ENCODE measurements at regions of chr1 and their contacts with region 1.

Region 1: DNA sequence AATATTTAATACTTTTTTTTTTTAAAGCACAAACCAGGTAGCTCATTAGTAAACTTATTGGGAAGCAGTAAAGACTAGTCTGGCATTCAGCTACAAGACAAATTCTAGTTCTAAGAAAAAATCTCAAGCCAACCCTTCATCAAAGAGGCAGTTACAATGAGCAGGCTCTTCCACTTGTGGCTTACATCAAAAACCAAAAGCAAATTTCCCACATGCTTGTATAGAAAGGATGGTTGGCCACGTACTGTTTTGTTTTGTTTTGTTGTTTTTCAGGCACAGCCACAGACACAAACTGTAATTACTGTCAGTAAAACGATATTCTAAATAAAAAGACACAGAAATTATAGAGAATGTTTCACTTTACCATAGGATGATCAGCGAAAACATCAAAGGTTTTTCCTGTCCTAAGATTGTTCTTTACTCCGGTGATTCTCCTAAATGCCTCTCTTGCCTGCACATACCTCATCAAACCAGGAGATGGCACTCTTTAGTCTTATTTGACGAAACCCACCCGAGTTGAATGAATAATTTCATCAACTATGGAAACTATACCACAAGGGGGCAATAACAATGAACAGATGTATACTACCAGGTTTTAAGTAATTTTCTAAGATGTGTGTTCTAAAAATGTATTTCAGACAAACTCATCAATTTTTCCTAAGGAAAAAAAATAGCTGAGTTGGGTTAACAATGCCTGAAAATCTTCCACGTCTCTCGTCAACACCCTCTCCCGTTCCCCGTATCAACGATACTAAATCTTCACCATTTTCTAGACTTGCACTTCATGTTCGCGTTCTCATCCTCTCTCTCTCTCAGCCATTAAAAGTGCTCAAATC is 26.9 kb downstream of the RPL5 start:
- DNase-seq: no peak

Region 2: DNA sequence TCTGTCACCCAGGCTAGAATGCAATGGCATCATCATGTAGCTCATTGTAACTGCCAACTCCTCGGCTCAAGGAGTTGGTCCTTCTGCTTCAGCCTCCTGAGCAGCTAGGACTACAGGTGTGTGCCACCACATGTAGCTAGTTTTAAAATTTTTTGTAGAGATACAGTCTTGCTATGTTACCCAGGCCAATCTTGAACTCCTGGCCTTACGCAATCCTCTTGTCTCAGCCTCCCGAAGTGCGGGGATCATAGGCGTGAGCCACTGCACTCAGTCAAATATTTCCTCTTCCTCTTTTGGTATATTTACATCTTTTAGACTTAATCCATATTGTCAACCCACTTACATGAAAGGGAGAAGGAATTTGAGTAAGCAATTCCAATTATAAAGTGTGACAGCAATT is 195.0 kb before region 1 on chr1:
- intact Hi-C with region 1: no loop called
- DNase-seq: no peak

Region 3: DNA sequence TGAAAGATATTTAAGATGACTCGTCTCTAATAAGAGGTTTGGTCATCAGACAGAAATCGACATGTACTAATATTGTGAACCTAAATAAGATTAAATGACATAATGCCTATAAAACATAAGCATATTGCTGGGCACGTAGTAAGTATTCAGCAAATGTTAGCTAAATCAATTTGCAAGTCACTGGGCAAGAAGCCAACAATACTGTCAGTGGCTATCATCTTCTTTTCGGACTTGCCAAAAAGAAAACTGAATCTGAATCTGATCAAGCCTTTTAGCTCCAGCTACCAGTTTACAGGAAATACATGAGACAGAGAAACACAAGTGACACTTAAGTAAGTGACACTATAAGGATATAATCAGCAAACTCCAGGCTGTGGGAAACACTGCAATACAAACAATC is 19.0 kb after region 1 on chr1:
- intact Hi-C with region 1: no loop called
- DNase-seq: no peak

Region 4: DNA sequence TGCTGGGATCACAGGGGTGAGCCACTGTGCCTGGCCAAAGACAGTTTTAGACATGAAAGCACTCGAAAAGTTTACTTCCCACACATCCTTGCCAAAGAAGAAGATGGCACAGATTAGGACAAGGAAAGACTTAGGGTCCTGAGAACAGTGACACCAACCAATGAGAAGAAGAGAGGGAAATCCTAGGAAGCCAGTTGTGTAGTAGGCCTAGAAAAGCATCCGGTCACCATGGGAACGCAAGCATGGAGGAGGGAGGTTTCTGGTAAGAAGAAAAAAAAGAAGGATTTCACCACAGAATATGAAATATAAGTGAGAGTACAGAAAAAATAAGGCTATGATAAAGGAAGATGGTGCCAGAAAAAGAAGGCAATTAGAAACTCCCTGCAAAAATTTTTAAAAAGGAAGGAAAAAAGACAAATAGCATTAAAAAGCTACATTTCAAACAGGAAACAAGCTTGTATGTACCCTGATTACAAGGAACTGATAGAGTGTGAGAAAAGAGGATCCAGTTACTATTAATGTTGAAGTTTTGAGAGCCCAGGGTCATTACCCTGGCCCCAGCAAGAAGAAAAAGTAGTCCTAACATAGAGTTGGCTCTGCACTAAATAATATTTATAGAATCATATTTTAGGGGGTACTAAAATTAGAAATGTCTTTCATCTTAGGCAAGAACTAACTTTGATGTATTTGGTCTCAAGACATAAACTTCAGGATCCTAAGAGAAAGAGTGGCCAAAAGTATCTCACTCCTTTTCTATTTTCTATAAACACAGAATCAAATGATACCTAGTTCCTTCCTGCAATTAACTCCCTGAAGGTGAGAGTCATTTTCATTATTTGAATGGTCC is 86.3 kb after region 1 on chr1:
- intact Hi-C with region 1: loop called (anchors 5 kb)
- DNase-seq: no peak

Region 5: DNA sequence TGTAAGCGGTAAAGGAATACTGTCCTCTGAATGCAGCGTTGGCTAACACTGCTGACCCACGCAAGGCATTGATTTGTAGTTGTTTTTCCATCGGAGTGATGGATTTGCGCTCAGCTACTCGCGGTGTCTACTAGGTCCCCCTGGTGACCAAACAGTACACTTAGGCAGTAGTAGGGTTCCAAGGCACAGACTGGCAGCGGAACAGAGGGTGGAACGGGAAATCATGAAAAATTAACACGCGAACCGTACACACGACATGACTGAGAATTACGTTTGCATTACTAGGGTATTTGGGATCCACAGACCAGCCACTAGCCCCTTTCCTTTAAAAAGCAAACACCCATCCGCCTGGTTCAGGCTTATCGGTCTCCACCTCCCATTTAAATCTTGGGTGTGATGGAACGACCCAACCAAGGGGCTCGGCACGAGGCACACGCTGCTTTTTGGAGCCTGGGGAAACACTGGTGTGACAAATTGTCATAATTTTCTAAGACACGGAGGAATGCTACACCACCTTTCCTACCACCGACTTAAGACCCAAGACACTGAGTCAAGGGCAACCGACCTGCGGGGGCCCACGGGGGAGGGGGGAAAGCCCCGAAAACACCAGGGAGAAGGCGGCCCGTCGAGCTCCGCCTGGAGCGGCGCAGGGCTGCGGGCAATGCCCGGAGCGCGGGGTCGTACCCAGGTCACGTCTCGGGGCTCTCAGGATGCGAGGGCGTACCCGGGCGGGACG is 101.8 kb after region 1 on chr1:
- intact Hi-C with region 1: loop called (anchors 2 kb)
- DNase-seq: peak; percentile 79

Region 6: DNA sequence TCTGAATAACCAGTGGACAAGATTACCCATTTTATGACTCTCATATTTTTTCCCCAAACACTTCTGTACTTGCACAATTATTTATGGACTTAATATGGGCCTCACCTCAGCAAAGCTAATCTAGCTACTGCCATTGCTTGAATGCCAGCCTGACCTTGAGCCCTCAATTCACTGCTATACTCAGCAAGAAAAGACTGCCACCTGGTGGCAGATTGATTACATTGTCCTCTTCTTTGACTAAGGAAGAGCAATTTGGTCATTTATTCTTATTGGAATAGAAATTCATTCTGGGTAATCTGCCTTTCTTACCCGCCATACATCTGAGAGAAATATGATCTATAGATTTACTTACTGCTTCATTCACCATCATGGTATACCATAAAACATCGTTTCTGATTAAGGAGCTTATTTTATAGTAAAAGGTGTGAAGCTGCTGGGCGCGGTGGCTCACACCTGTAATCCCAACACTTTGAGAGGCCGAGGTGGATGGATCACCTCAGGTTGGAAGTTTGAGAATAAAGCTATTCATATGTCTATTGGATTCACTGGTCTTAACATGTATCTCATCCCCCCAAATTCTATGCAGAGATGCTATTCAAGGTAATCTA is 135.4 kb after region 1 on chr1:
- intact Hi-C with region 1: loop called (anchors 1 kb)
- DNase-seq: no peak

Region 7: DNA sequence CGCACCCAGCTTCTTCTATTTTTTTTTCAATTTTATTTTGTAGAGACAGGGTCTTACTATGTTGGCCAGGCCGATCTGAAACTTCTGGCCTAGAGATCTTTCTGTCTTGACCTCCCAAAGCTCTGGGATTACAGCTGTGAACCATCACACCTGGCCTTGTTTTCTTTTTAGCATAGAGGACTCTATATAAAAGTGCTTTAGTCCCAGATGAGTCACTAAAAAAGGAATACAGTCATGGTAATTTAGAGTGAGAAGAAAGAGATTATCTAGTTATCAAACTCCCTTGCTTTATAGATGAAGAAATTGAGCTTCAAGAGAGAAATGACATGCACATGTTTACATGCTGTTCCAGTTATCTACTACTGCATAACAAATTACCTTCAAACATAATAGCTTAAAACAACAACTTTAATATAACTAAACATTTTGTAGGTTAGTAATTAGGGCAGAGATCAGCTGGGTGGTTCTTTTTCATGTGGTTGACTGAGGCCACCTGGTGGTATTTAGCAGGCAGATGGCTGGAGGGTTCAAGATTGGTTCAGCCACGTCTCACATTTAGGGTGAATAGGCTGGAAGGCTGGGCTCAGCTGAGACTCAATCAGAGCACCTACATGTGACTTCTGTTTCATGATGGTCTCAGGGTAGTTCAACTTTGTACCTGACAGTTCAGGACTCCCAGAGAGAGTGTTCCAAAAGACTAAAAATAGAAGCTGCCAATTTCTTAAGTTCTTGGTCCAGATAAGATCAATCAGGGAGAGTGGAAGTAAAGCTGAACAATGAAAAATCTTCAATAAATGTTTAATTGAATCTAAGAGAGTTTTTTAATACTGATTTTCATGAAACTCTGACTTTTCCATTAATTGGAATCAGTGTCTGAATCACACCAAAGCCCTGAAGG is 203.4 kb after region 1 on chr1:
- intact Hi-C with region 1: loop called (anchors 5 kb)
- DNase-seq: no peak

Region 8: DNA sequence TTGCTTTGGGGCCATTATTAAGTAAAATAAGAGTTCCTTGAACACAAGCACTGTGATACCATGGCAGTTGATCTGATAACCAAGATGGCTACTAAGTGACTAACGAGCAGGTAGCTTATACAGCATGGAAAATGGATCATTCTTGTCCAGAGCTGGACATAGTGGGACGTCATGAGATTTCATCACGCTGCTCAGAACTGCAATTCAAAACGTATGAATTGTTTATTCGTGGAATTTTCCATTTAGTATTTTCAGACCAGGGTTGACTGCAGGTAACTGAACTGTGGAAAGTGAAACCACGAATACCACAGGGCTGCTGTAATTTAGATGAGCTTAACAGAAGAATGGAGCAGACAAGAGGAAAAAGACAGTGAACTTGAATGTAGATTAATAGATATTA is 360.7 kb after region 1 on chr1:
- intact Hi-C with region 1: no loop called
- DNase-seq: no peak